IMR-90 (cell line): ENCODE measurements at regions of chr6 and their contacts with region 1.

Region 1: DNA sequence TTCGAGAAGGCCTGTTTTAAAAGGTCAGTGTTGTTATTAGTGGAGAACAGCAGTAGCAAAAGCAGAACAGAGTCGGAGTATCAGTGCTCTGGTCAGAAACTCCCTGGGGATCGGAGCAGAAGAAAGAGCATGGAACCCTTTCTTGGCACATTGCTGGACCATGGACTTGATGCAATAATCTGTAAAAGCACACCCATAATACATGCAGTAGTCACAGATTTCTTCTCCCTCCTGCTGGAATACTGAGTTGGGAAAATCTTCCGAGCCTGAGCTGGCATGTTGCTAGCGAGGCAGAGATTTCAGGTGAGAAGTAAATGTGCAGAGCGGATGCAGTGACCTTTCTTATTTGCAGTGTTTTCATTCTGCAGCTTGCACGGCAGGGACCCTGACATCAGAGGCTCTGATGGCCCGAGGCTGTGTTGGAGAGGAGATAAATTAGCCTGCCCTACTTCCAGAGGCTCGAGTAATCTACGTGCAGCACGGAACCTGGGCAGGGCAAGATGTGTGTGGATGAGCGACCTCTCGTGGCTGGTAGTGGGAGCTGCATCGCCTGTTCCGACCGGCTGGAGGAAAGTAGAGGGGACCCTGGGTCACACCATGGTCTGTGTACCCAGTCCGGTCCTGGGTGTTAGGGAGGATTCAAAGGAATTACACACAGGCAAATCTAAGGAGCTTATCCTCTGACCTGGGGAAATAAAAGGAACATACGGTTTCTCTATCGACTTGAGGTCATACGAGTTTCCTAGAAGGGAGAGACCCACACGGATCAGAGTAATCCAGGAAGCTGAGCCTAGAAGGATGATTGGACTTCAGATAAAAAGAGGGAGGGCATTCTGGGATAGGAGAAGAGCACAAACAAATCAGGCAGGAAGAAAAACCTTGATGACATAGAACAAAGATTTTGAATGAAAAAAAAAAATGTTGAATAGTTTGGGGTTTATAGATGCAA is 137.0 kb upstream of the STMND1 start:
- DNase-seq: peak; percentile 70
- ATAC-seq: peak; percentile 94
- H3K4me3 ChIP-seq: no peak overlapping the region
- H3K27ac ChIP-seq: no peak overlapping the region
- H3K4me1 ChIP-seq: peaks cover 16% of the 10 kb centered on the region
- H3K27me3 ChIP-seq: no peaks in the 10 kb centered on the region
- CTCF ChIP-seq: peak; percentile 90
- POLR2A ChIP-seq: no peak
- RAD21 ChIP-seq: peak; percentile 94

Region 2: DNA sequence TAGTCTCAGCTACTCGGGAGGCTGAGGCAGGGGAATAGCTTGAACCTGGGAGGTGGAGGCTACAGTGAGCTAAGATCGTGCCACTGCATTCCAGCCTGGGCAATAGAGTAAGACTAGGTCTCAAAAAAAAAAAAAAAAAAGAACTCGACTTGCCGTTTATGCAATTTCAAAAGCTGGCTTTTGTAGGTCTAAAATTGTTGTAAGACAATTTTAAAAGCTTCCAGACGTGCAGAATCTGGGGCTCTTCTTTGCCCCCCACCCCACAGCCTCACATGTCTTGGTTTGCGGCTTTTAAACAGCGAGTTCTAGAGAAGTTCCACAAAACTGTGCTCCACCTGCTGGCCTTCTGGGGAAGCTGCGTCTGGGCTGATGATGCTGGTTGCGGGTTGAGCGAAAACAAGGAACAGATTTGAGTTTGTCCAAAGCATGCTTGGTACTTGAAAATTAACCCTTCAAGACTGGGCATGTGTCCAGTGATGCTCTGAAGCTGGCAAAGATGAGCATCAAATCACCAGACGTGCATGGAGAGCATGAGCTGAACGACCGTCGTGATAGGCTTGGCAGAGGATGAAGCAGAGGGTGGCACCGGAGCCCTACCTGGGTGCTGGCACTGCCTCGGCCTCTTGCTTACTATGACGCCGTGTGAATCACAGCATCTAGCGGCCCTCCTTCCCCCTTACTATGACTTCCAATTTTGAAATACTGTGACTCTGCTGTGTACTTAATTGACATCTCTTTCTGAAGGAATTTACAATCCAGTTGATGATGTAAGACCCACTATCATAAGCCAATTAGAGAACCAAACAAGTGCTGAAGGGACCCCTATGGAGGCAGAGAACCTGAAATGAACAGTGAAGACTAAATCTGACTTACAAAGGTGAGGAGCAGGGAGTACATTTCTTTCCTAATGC is 555.0 kb before region 1 on chr6:
- CTCF ChIA-PET with region 1: no interaction called
- POLR2A ChIA-PET with region 1: no interaction called
- dilution Hi-C with region 1: no loop called
- in situ Hi-C with region 1: no loop called
- intact Hi-C with region 1: loop called (anchors 10 kb)
- DNase-seq: peak; percentile 45
- ATAC-seq: no peak
- H3K4me3 ChIP-seq: no peak overlapping the region
- H3K27ac ChIP-seq: no peak overlapping the region
- H3K4me1 ChIP-seq: peaks cover 14% of the 10 kb centered on the region
- H3K27me3 ChIP-seq: no peaks in the 10 kb centered on the region
- CTCF ChIP-seq: peak; percentile 50
- POLR2A ChIP-seq: no peak
- RAD21 ChIP-seq: peak; percentile 50

Region 3: DNA sequence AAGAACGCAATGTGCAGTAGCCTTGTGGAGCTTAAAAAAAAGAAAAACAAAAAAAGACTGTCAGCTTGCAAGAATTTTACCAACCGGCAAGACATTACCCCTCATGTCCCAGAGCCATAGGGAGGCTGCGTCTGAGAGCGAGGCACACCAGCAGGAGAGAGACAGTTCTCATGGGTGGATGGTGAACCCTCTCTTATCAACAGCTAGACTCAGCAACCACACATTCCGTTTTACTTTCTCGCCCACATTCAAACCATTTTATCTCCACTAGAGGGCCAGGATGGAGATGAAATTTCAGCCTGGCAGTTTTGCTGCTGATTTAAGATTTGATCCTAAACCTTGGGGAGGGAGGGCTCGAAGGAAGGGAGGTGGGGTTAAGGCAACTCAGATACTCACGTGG is 450.6 kb before region 1 on chr6:
- CTCF ChIA-PET with region 1: no interaction called
- POLR2A ChIA-PET with region 1: no interaction called
- dilution Hi-C with region 1: no loop called
- in situ Hi-C with region 1: no loop called
- intact Hi-C with region 1: loop called (anchors 10 kb)
- DNase-seq: peak; percentile 76
- ATAC-seq: peak; percentile 76
- H3K4me3 ChIP-seq: no peak overlapping the region
- H3K27ac ChIP-seq: no peak overlapping the region
- H3K4me1 ChIP-seq: peaks cover 5% of the 10 kb centered on the region; the same call in 1 of the 2 replicates
- H3K27me3 ChIP-seq: no peaks in the 10 kb centered on the region
- CTCF ChIP-seq: peak; percentile 66
- POLR2A ChIP-seq: no peak
- RAD21 ChIP-seq: peak; percentile 77

Region 4: GRCh38 chr6:16770701-16771569 is 193.9 kb before region 1 on chr6:
- CTCF ChIA-PET with region 1: interaction called, 3 read pairs
- POLR2A ChIA-PET with region 1: no interaction called
- dilution Hi-C with region 1: no loop called
- in situ Hi-C with region 1: loop called (anchors 5 kb)
- intact Hi-C with region 1: no loop called
- DNase-seq: peak; percentile 60
- ATAC-seq: no peak
- H3K4me3 ChIP-seq: no peak overlapping the region
- H3K27ac ChIP-seq: peak overlapping the region; percentile 95
- H3K4me1 ChIP-seq: peaks cover 24% of the 10 kb centered on the region
- H3K27me3 ChIP-seq: no peaks in the 10 kb centered on the region
- CTCF ChIP-seq: peak; percentile 66
- POLR2A ChIP-seq: no peak
- RAD21 ChIP-seq: peak; percentile 55

Region 5: GRCh38 chr6:16849280-16849987 is 115.4 kb before region 1 on chr6:
- CTCF ChIA-PET with region 1: no interaction called
- POLR2A ChIA-PET with region 1: no interaction called
- dilution Hi-C with region 1: no loop called
- in situ Hi-C with region 1: no loop called
- intact Hi-C with region 1: loop called (anchors 10 kb)
- DNase-seq: peak; percentile 79
- ATAC-seq: peak; percentile 94
- H3K4me3 ChIP-seq: no peak overlapping the region
- H3K27ac ChIP-seq: peak overlapping the region; percentile 38
- H3K4me1 ChIP-seq: peaks cover 4% of the 10 kb centered on the region
- H3K27me3 ChIP-seq: no peaks in the 10 kb centered on the region
- CTCF ChIP-seq: no peak
- POLR2A ChIP-seq: no peak
- RAD21 ChIP-seq: no peak

Region 6: GRCh38 chr6:17086469-17086868 is 121.6 kb after region 1 on chr6:
- CTCF ChIA-PET with region 1: interaction called, 4 read pairs
- POLR2A ChIA-PET with region 1: no interaction called
- dilution Hi-C with region 1: no loop called
- in situ Hi-C with region 1: no loop called
- intact Hi-C with region 1: loop called (anchors 1 kb)
- DNase-seq: peak; percentile 83
- ATAC-seq: peak; percentile 86
- H3K4me3 ChIP-seq: no peak overlapping the region
- H3K27ac ChIP-seq: no peak overlapping the region
- H3K4me1 ChIP-seq: 0 out of 2 replicates have a peak, but pooled peaks cover 1% of the 10 kb centered on the region
- H3K27me3 ChIP-seq: no peaks in the 10 kb centered on the region; the same call in 1 of the 2 replicates
- CTCF ChIP-seq: peak; percentile 82
- POLR2A ChIP-seq: no peak
- RAD21 ChIP-seq: peak; percentile 90

Region 7: DNA sequence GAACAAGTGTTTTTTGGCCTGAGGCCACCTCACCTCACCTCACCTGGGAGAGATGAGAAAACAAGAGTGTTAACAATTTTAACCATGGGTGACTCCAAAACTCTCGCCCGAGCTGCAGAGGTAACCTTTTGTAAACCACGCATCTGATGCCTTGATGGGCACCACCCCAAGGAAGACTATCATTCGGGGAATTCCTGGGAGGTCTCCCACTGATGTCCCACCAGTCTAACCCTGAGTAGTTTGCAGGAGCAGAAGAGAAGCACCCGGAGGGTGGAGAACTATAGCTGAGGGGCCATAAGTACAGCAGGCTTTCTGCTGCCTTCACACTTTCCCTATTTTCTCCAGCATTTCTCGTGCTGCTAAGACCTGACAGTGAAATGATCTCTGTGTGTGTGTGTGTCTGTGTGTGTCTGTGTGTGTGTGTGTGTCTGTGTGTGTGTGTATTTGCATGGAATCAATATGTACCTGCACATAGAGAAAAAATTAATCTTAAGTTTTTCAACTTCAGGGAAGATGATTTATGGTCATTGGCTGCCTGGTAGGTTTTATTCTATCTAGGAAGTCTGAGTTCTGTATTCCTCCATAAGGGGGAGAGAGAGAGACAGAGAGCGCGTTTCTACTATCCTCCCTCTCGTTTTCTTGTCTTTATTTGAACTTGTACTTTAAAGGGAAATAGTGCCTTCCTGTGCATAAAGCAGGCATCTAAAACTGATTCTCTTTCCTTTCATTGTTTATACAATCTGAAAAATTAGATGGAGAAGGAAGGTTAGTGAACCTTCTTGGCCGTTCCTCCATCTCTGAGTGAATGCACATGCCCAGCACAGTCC is 504.4 kb after region 1 on chr6:
- CTCF ChIA-PET with region 1: no interaction called
- POLR2A ChIA-PET with region 1: no interaction called
- dilution Hi-C with region 1: no loop called
- in situ Hi-C with region 1: no loop called
- intact Hi-C with region 1: no loop called
- DNase-seq: no peak
- ATAC-seq: no peak
- H3K4me3 ChIP-seq: no peak overlapping the region
- H3K27ac ChIP-seq: no peak overlapping the region
- H3K4me1 ChIP-seq: peaks cover 10% of the 10 kb centered on the region
- H3K27me3 ChIP-seq: no peaks in the 10 kb centered on the region
- CTCF ChIP-seq: no peak
- POLR2A ChIP-seq: no peak
- RAD21 ChIP-seq: no peak